CD8-positive, alpha-beta memory T cell (primary cell): ENCODE measurements at regions of chr16 and their contacts with region 1.

Region 1: GRCh38 chr16:72832621-72833248 is 215.2 kb downstream of the ZFHX3 start:
- DNase-seq: peak; percentile 11 to 63 (median 36)
- H3K4me3 ChIP-seq: no peak overlapping the region
- H3K4me3 Mint-ChIP-seq: no peak overlapping the region
- H3K27ac ChIP-seq: no peak overlapping the region
- H3K27ac Mint-ChIP-seq: no peak overlapping the region
- H3K4me1 ChIP-seq: no peaks in the 10 kb centered on the region
- H3K4me1 Mint-ChIP-seq: no peaks in the 10 kb centered on the region
- H3K27me3 ChIP-seq: no peaks in the 10 kb centered on the region
- H3K27me3 Mint-ChIP-seq: no peaks in the 10 kb centered on the region

Region 2: GRCh38 chr16:72807245-72807644 is 25.5 kb before region 1 on chr16:
- CTCF ChIA-PET with region 1: interaction called, 10 read pairs
- POLR2A ChIA-PET with region 1: no interaction called
- DNase-seq: no peak
- H3K4me3 ChIP-seq: no peak overlapping the region
- H3K4me3 Mint-ChIP-seq: no peak overlapping the region
- H3K27ac ChIP-seq: no peak overlapping the region
- H3K27ac Mint-ChIP-seq: peak overlapping the region in 1 of 8 donors; percentile 60
- H3K4me1 ChIP-seq: no peaks in the 10 kb centered on the region
- H3K4me1 Mint-ChIP-seq: no peaks in the 10 kb centered on the region
- H3K27me3 ChIP-seq: no peaks in the 10 kb centered on the region
- H3K27me3 Mint-ChIP-seq: peaks cover under 1 to 2% of the 10 kb centered on the region in 2 donors

Region 3: GRCh38 chr16:72847187-72848027 is 14.7 kb after region 1 on chr16:
- CTCF ChIA-PET with region 1: interaction called, 14 read pairs
- POLR2A ChIA-PET with region 1: no interaction called
- DNase-seq: no peak
- H3K4me3 ChIP-seq: no peak overlapping the region
- H3K4me3 Mint-ChIP-seq: no peak overlapping the region
- H3K27ac ChIP-seq: no peak overlapping the region
- H3K27ac Mint-ChIP-seq: no peak overlapping the region
- H3K4me1 ChIP-seq: no peaks in the 10 kb centered on the region
- H3K4me1 Mint-ChIP-seq: peaks cover 4 to 18% (median 6%) of the 10 kb centered on the region in 3 donors
- H3K27me3 ChIP-seq: no peaks in the 10 kb centered on the region
- H3K27me3 Mint-ChIP-seq: peaks cover 6 to 14% of the 10 kb centered on the region in 2 donors

Region 4: GRCh38 chr16:72913377-72914096 is 80.8 kb after region 1 on chr16:
- CTCF ChIA-PET with region 1: no interaction called
- POLR2A ChIA-PET with region 1: no interaction called
- DNase-seq: no peak
- H3K4me3 ChIP-seq: no peak overlapping the region
- H3K4me3 Mint-ChIP-seq: no peak overlapping the region
- H3K27ac ChIP-seq: no peak overlapping the region
- H3K27ac Mint-ChIP-seq: no peak overlapping the region
- H3K4me1 ChIP-seq: no peaks in the 10 kb centered on the region
- H3K4me1 Mint-ChIP-seq: no peaks in the 10 kb centered on the region
- H3K27me3 ChIP-seq: no peaks in the 10 kb centered on the region
- H3K27me3 Mint-ChIP-seq: peaks cover 0 to 3% of the 10 kb centered on the region in 2 donors

Region 5: GRCh38 chr16:72978212-72978611 is 145.5 kb after region 1 on chr16:
- CTCF ChIA-PET with region 1: no interaction called
- POLR2A ChIA-PET with region 1: no interaction called
- DNase-seq: no peak
- H3K4me3 ChIP-seq: no peak overlapping the region
- H3K4me3 Mint-ChIP-seq: no peak overlapping the region
- H3K27ac ChIP-seq: no peak overlapping the region
- H3K27ac Mint-ChIP-seq: no peak overlapping the region
- H3K4me1 ChIP-seq: no peaks in the 10 kb centered on the region
- H3K4me1 Mint-ChIP-seq: no peaks in the 10 kb centered on the region
- H3K27me3 ChIP-seq: no peaks in the 10 kb centered on the region
- H3K27me3 Mint-ChIP-seq: peaks cover 0 to 1% of the 10 kb centered on the region in 2 donors